ENCODE measurements at regions of chr22 and their contacts with region 1.

Region 1: GRCh38 chr22:19854778-19855503 is at the starts of genes GNB1L and RTL10:
- DNase-seq: peak; percentile 95
- ATAC-seq: peak; percentile 83
- H3K4me3 ChIP-seq: peak within 1 kb of the TSS; percentile 96
- H3K27ac ChIP-seq: peak within 1 kb of the TSS; percentile 71
- H3K4me1 ChIP-seq: peaks cover 44% of the 10 kb centered on the region
- H3K27me3 ChIP-seq: no peaks in the 10 kb centered on the region
- CTCF ChIP-seq: no peak
- total RNA-seq, gene GNB1L: 27.0 and 28.8 TPM in 2 replicates
- total RNA-seq, gene RTL10: 7.8 and 12.2 TPM in 2 replicates

Region 2: DNA sequence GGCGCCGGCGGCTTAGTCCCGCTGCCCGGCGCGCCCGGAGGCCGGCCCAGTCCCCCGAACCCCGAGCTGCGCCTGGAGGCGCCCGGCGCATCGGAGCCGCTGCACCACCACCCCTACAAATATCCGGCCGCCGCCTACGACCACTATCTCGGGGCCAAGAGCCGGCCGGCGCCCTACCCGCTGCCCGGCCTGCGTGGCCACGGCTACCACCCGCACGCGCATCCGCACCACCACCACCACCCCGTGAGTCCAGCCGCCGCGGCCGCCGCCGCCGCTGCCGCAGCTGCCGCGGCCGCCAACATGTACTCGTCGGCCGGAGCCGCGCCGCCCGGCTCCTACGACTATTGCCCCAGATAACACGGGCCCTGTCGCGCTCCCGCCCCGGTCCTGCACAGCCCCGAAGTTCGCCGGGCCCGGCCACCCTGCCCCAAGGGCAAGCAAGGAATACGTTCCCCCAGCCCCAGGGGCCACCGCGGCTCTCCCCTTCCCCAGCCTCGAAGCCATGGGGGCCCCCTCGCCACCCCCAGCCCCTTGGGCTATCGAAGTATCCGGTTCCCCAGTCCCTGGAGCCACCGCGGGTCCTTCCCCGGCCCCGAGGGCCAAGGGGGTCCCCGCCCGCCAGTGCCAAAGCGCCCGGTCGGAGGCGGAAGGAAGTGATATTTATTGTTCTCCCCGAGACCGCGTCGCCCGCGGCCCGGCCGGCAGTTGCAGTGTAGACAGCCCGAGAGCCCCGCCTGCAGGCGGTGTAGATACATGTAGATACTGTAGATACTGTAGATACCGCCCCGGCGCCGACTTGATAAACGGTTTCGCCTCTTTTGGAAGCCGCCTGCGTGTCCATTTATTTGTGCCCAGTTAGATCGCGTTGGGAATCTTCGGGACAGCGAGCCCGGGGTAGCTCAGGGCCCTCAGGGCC is 88.2 kb before region 1 on chr22:
- CTCF ChIA-PET with region 1: no interaction called
- POLR2A ChIA-PET with region 1: no interaction called
- intact Hi-C with region 1: loop called (anchors 10 kb)
- DNase-seq: no peak
- ATAC-seq: no peak
- H3K4me3 ChIP-seq: no peak overlapping the region
- H3K27ac ChIP-seq: no peak overlapping the region
- H3K4me1 ChIP-seq: peaks cover 7% of the 10 kb centered on the region; the same call in 1 of the 2 replicates
- H3K27me3 ChIP-seq: no peaks in the 10 kb centered on the region
- CTCF ChIP-seq: no peak

Region 3: GRCh38 chr22:20174785-20175596 is 320.1 kb after region 1 on chr22:
- CTCF ChIA-PET with region 1: no interaction called
- POLR2A ChIA-PET with region 1: no interaction called
- intact Hi-C with region 1: no loop called
- DNase-seq: no peak
- ATAC-seq: peak; percentile 49
- H3K4me3 ChIP-seq: no peak overlapping the region
- H3K27ac ChIP-seq: no peak overlapping the region
- H3K4me1 ChIP-seq: no peaks in the 10 kb centered on the region
- H3K27me3 ChIP-seq: no peaks in the 10 kb centered on the region
- CTCF ChIP-seq: peak; percentile 31; the same call in 1 of the 2 replicates

Measured in PC-3 (cell line).